Transverse colon (tissue), 4 donors: ENCODE measurements at regions of chr1 and their contacts with region 1.

Region 1: GRCh38 chr1:92623187-92623778 is 136.6 kb upstream of the GFI1 start:
- DNase-seq: no peak
- H3K4me3 ChIP-seq: no peak overlapping the region
- H3K27ac ChIP-seq: no peak overlapping the region
- H3K4me1 ChIP-seq: no peaks in the 10 kb centered on the region
- H3K27me3 ChIP-seq: no peaks in the 10 kb centered on the region
- CTCF ChIP-seq: peak in 4 of 5 experiments; percentile 22 to 27 (median 25)
- EP300 ChIP-seq: no peak
- POLR2A ChIP-seq: no peak

Region 2: DNA sequence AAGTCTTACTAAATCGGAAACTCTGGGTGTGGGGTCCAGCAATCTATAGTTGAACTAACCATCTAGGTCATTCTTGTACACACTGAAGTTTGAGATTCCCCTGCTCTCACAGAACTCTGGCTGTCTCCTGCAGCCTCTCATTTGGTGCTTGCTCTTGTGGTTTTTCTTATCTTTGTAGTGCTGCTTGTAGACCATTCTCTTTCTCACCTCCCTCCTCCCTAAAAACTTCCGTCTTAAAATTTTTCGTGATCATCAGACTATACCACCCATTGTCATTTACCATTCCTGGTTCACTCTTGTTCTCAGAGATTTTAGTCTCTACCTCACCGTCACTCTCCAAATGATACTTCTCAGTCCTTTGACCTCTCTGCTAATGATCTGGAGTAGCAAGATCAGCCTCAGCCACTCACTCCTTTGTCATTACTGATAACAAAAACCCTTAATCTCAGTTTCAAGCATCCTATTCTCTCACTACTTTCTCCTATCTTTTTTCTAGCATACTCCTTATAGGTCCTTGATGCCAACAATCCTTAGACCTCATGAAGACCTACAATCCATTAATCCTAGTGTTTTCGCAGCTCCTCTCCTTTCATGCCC is 606.5 kb before region 1 on chr1:
- in situ Hi-C with region 1: loop called in 1 of 4 experiments (anchors 25 kb)
- intact Hi-C with region 1: no loop called
- DNase-seq: no peak
- H3K4me3 ChIP-seq: no peak overlapping the region
- H3K27ac ChIP-seq: no peak overlapping the region
- H3K4me1 ChIP-seq: no peaks in the 10 kb centered on the region
- H3K27me3 ChIP-seq: peaks cover 4% of the 10 kb centered on the region
- CTCF ChIP-seq: no peak
- EP300 ChIP-seq: no peak
- POLR2A ChIP-seq: no peak

Region 3: DNA sequence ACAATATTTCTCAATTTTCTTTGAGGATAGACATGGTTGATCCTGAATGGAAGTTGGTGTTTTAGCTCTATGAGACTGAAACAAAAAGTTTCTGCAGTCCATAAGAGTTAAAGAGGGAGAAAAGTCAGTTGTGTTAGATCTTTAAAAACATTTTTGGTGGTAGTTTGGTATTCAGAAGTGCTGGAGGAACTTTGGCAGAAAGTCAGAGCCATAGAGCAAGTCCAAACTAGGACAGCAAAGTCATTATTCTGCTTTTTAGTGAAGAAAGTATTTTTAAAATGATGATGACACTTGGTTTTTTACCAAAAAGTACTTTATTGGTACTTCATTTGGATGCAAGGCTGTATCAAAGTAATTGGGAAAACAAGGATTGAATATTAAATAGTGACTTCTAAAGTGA is 866.5 kb after region 1 on chr1:
- in situ Hi-C with region 1: no loop called
- intact Hi-C with region 1: no loop called
- DNase-seq: no peak
- H3K4me3 ChIP-seq: no peak overlapping the region
- H3K27ac ChIP-seq: peak overlapping the region in 1 of 4 donors; percentile 4
- H3K4me1 ChIP-seq: peaks cover 3 to 17% (median 6%) of the 10 kb centered on the region in 4 donors
- H3K27me3 ChIP-seq: no peaks in the 10 kb centered on the region
- CTCF ChIP-seq: no peak
- EP300 ChIP-seq: no peak
- POLR2A ChIP-seq: no peak